Endothelial cell of umbilical vein (primary cell): ENCODE measurements at regions of chr6 and their contacts with region 1.

Region 1: GRCh38 chr6:29524444-29525310 is 34.9 kb downstream of the UBD start:
- DNase-seq: no peak
- H3K4me3 ChIP-seq: no peak overlapping the region
- H3K27ac ChIP-seq: no peak overlapping the region
- H3K4me1 ChIP-seq: no peaks in the 10 kb centered on the region
- H3K27me3 ChIP-seq: no peaks in the 10 kb centered on the region
- CTCF ChIP-seq: no peak
- POLR2A ChIP-seq: no peak

Region 2: DNA sequence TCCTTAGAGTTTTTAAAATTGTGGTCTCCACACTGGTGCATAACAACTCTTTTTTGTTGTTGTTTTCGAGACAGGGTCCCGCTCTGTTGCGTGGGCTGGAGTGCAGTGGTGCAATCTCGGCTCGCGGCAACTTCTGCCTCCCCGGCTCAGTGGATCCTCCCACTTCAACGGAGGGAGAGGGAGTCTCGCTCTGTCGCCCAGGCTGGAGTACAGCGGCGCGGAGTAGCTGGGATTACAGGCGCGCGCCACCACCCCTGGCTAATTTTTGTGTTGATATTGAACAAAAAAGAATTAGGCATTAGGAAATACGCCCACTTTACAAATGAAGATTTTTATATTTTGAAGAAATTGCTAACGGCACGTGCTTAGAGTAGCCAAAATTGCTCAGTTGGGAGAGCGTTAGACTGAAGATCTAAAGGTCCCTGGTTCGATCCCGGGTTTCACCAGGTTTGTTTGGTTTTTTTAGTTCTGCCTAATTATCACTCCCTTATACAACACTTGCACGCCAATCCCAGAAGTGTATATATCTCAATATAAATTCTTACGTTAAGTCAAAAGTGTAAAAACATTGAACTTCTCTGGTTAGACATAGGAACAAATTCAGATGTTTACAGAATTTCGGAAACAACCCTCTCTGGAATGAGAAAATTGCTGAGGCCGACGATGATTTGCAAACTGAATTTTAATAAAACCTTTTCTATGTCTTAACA is 760.5 kb before region 1 on chr6:
- CTCF ChIA-PET with region 1: no interaction called
- POLR2A ChIA-PET with region 1: no interaction called
- dilution Hi-C with region 1: no loop called
- intact Hi-C with region 1: loop called (anchors 5 kb)
- DNase-seq: no peak
- H3K4me3 ChIP-seq: no peak overlapping the region
- H3K27ac ChIP-seq: no peak overlapping the region
- H3K4me1 ChIP-seq: no peaks in the 10 kb centered on the region
- H3K27me3 ChIP-seq: peaks cover 30 to 34% of the 10 kb centered on the region in 2 experiments
- CTCF ChIP-seq: no peak
- POLR2A ChIP-seq: no peak

Region 3: GRCh38 chr6:28884423-28885131 is 640.1 kb before region 1 on chr6:
- CTCF ChIA-PET with region 1: no interaction called
- POLR2A ChIA-PET with region 1: no interaction called
- dilution Hi-C with region 1: no loop called
- intact Hi-C with region 1: no loop called
- DNase-seq: no peak
- H3K4me3 ChIP-seq: no peak overlapping the region
- H3K27ac ChIP-seq: no peak overlapping the region
- H3K4me1 ChIP-seq: peaks cover 2% of the 10 kb centered on the region
- H3K27me3 ChIP-seq: peaks cover 14 to 15% of the 10 kb centered on the region in 2 experiments
- CTCF ChIP-seq: no peak
- POLR2A ChIP-seq: no peak

Region 4: GRCh38 chr6:30311101-30311500 is 786.4 kb after region 1 on chr6:
- CTCF ChIA-PET with region 1: no interaction called
- POLR2A ChIA-PET with region 1: no interaction called
- dilution Hi-C with region 1: no loop called
- intact Hi-C with region 1: no loop called
- DNase-seq: no peak
- H3K4me3 ChIP-seq: no peak overlapping the region
- H3K27ac ChIP-seq: no peak overlapping the region
- H3K4me1 ChIP-seq: no peaks in the 10 kb centered on the region
- H3K27me3 ChIP-seq: no peaks in the 10 kb centered on the region
- CTCF ChIP-seq: no peak
- POLR2A ChIP-seq: no peak